ENCODE measurements at regions of chr17 and their contacts with region 1.

Region 1: DNA sequence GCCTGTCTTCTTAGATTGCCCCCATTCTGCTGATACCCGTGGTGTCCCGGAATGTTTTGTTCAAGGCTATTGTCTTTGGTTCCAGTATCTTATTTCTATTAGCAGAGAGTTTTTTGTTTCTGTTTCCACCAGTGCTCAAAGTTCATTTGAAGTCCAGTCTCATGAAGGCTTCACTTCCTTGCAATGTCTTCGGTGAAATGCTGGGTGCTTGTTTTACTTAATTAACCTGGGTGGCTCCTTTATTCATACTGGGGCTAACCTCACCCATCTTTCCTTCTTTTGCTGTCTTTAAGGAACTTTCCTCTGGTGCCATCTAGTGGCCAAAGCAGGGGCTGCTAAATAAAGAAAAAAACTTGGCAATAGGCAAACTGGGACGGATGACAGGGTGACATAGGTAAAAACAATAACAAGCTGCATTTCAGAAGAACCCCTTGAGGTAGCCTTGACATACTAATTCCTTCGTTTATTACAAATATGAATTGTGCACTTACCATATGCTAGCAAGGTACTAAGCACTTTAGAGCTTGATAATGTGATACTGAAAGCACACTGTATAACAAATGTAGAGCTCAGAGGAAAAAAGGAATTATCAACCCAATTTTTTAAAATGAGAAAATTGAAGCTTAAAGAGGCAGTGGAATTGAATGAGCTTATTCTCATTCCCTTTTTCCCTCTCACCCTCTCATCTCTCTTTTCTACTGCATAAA is 2.8 kb upstream of the SMIM36 start:
- ATAC-seq: peak; percentile 33 to 90 (median 50)
- H3K4me3 ChIP-seq: no peak overlapping the region
- H3K27ac ChIP-seq: no peak overlapping the region
- H3K4me1 ChIP-seq: no peaks in the 10 kb centered on the region

Region 2: GRCh38 chr17:55005520-55005919 is 508.5 kb before region 1 on chr17:
- in situ Hi-C with region 1: loop called in 1 of 9 experiments (anchors 25 kb)
- ATAC-seq: peak in 2 of 8 experiments; percentile 34
- H3K4me3 ChIP-seq: no peak overlapping the region
- H3K27ac ChIP-seq: no peak overlapping the region
- H3K4me1 ChIP-seq: no peaks in the 10 kb centered on the region

Region 3: GRCh38 chr17:55356434-55357328 is 157.4 kb before region 1 on chr17:
- in situ Hi-C with region 1: loop called in 1 of 9 experiments (anchors 25 kb)
- ATAC-seq: peak in 4 of 8 experiments; percentile 49 to 98 (median 96)
- H3K4me3 ChIP-seq: no peak overlapping the region
- H3K27ac ChIP-seq: no peak overlapping the region
- H3K4me1 ChIP-seq: no peaks in the 10 kb centered on the region

Measured in motor neuron (in vitro differentiated cells).